Posterior cingulate gyrus (tissue), 11 donors: ENCODE measurements at regions of chr4 and their contacts with region 1.

Region 1: GRCh38 chr4:69689599-69689998 is 36.6 kb upstream of the UGT2A1 start:
- DNase-seq: no peak

Region 2: GRCh38 chr4:69649629-69650028 is 40.0 kb before region 1 on chr4:
- intact Hi-C with region 1: no loop called
- DNase-seq: no peak

Region 3: GRCh38 chr4:69731241-69731640 is 41.6 kb after region 1 on chr4:
- intact Hi-C with region 1: no loop called
- DNase-seq: no peak

Region 4: GRCh38 chr4:69881173-69881773 is 191.7 kb after region 1 on chr4:
- intact Hi-C with region 1: loop called (anchors 1 kb)
- DNase-seq: peak in 4 of 10 donors; percentile 8 to 70 (median 14)

Region 5: DNA sequence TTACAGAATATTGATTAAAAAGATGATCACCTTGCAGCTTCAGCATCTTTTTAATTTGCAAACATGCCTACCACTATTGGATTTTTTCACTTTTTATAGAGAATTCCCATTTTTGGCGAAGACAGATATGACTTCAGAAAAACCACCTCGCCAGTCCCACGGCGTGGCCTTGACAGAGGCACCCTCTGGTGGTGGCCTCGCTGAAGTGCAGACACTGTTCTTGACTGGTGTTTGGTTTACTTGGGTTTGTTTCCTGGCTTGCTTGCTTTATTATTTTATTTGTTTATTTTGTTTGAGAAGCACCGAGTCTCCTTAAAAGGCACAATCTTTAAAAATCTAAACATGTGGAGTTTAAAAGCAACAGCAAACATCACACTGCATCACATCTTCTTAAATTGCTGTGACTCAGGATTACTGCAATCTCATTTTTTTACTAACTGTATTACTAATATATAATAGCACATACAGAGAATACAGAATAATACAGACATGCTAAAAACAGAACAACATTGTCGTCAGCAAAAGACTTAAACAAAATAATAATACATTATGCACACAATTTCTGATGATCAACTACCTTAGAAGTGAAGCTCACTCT is 815.7 kb after region 1 on chr4:
- intact Hi-C with region 1: loop called (anchors 2 kb)
- DNase-seq: peak; percentile 36 to 95 (median 69)

Region 6: DNA sequence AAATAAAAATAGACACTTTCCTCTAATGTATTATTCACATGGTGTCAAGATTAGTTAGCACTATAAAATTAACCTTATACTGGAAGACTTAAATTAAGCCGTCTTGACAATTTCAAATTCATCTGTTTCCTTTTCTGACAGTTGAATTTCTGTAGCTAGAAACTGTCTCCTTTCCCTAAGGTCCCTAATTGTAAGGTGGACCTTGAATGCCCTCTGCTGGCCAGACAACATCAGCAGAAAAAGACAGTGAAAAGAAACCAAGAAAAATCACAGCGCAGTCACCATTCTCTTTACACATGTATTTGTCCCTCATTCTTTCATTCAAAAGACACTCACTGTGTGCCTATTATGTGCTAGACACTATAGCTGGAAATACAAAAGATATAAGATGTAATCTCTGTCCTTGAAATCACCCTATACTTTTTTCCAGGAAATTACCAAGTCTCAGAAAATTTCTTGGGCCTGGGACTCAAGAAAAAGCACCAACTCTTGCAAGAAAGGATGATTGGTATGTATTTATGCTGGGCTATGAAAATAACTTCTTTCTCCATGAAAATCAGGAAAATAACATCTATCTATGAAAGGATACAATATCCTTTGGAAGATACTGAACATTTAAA is 869.7 kb after region 1 on chr4:
- intact Hi-C with region 1: loop called (anchors 1 kb)
- DNase-seq: peak in 7 of 10 donors; percentile 13 to 82 (median 52)